ENCODE measurements at regions of chr5 and their contacts with region 1.

Region 1: GRCh38 chr5:154940772-154941620 is at the start of gene MRPL22:
- DNase-seq: peak; percentile 86 to 92
- H3K4me3 ChIP-seq: peak within 1 kb of the TSS; percentile 81
- H3K27ac ChIP-seq: peak within 1 kb of the TSS; percentile 35
- H3K4me1 ChIP-seq: peaks cover 26% of the 10 kb centered on the region; the same call in 1 of the 2 replicates
- H3K27me3 ChIP-seq: no peaks in the 10 kb centered on the region
- CTCF ChIP-seq: no peak
- total RNA-seq, gene MRPL22: 80.8 and 94.0 TPM in 2 replicates

Region 2: DNA sequence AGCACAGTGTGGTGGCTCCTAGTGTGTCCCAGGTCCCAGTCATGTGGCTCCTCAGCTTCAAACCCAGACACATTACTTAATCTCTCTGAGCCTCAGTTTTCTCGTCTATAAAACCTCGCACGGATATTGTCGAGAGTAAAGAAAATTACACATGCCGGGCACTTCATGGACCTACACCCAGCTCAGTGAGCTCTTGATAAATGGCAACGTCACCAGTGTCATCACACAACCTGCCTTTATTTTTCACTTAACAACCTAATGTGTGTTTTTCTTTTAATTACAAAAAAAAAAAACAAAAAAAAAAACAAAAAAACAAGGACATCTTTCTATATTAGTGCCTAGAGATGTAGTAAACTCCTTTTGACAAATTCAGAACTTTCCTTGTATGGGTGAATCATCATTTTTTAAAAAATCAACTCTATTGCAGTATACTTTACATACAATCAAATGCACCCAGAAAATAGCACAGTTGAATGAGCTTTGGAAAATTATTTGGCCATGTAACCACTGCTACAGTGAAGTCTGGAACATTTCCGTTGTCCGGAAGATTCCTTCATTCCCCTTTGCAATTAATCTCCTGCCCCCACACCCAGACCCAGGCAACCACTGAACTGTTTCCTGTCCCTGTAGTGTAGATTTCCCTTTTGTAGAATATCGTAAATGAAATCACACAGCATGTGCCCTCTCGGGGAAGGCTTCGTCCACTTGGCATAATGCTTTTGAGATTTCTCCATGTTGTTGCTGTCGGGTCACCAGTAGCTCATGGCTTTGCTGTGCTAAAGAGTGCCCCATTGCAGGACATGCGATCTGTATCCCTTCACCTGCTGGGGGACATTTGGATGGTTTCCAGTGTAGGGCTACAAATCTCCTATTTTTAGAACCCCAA is 286.3 kb before region 1 on chr5:
- CTCF ChIA-PET with region 1: no interaction called
- POLR2A ChIA-PET with region 1: no interaction called
- intact Hi-C with region 1: loop called (anchors 5 kb)
- DNase-seq: no peak
- H3K4me3 ChIP-seq: no peak overlapping the region
- H3K27ac ChIP-seq: no peak overlapping the region
- H3K4me1 ChIP-seq: no peaks in the 10 kb centered on the region
- H3K27me3 ChIP-seq: no peaks in the 10 kb centered on the region
- CTCF ChIP-seq: no peak

Region 3: GRCh38 chr5:154899151-154899816 is 41.7 kb before region 1 on chr5:
- CTCF ChIA-PET with region 1: no interaction called
- POLR2A ChIA-PET with region 1: no interaction called
- intact Hi-C with region 1: no loop called
- DNase-seq: no peak
- H3K4me3 ChIP-seq: no peak overlapping the region
- H3K27ac ChIP-seq: no peak overlapping the region
- H3K4me1 ChIP-seq: no peaks in the 10 kb centered on the region
- H3K27me3 ChIP-seq: no peaks in the 10 kb centered on the region
- CTCF ChIP-seq: no peak